Right ventricle myocardium inferior (tissue), 1 donor: ENCODE measurements at regions of chr15 and their contacts with region 1.

Region 1: DNA sequence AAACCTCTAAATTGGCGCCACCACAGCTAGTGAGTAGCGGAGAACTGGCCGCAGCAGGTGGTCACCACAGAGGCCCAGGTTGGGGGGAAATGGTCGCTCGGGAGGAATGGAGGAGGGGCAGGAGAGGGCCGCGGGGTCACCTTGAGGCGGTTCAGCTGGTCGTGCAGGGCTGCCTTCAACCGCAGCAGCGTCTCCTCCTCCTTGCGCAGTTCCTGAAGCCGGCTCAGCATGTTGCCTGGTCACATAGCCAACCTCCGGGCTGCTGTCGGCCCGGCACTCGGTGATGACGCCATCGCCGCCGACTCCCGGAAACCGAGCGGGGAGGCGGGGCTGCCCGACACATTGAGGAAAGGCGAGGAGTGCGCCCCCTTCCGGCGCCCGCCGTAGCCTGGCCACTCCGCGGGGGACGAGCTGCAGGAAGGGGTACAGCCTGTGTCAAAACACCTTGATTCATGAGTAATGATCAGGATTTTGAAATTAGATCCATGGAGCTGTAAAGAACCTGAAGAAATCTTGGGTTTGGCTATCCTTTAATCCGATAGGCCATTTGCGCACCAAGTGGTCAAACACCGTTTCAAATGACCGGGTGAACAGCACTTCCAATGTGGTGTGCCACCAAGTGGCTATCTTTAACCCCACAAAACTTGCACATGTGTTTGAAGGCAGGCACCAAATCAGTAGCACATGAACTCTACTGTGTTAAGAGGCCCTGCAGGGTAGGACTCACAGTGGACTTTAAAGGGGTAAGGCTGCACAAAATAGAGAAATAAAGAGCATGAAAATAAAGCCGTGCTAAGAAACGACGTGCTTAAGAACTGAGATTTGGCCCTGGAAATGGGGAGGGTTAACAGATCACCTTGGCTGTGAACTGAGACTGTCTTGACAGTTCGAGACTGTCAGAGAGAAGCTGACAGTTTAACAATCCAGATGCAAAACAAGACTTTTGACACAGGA is at the start of gene SNAPC5:
- DNase-seq: peak; percentile 99
- ATAC-seq: peak; percentile 97
- total RNA-seq, gene SNAPC5: 40.8 TPM

Region 2: GRCh38 chr15:65584241-65584640 is 913.5 kb before region 1 on chr15:
- intact Hi-C with region 1: no loop called
- DNase-seq: no peak
- ATAC-seq: no peak

Region 3: GRCh38 chr15:66251790-66252684 is 245.7 kb before region 1 on chr15:
- intact Hi-C with region 1: loop called (anchors 5 kb)
- DNase-seq: peak; percentile 71
- ATAC-seq: peak; percentile 82

Region 4: GRCh38 chr15:66293419-66294156 is 204.2 kb before region 1 on chr15 and contains the start of gene DIS3L:
- intact Hi-C with region 1: loop called (anchors 5 kb)
- DNase-seq: peak; percentile 88
- ATAC-seq: peak; percentile 91
- total RNA-seq, gene DIS3L: 40.3 TPM

Region 5: GRCh38 chr15:66356345-66357236 is 141.2 kb before region 1 on chr15 and contains the start of gene TIPIN:
- intact Hi-C with region 1: loop called (anchors 10 kb)
- DNase-seq: peak; percentile 97
- ATAC-seq: peak; percentile 98
- total RNA-seq, gene TIPIN: 2.8 TPM

Region 6: DNA sequence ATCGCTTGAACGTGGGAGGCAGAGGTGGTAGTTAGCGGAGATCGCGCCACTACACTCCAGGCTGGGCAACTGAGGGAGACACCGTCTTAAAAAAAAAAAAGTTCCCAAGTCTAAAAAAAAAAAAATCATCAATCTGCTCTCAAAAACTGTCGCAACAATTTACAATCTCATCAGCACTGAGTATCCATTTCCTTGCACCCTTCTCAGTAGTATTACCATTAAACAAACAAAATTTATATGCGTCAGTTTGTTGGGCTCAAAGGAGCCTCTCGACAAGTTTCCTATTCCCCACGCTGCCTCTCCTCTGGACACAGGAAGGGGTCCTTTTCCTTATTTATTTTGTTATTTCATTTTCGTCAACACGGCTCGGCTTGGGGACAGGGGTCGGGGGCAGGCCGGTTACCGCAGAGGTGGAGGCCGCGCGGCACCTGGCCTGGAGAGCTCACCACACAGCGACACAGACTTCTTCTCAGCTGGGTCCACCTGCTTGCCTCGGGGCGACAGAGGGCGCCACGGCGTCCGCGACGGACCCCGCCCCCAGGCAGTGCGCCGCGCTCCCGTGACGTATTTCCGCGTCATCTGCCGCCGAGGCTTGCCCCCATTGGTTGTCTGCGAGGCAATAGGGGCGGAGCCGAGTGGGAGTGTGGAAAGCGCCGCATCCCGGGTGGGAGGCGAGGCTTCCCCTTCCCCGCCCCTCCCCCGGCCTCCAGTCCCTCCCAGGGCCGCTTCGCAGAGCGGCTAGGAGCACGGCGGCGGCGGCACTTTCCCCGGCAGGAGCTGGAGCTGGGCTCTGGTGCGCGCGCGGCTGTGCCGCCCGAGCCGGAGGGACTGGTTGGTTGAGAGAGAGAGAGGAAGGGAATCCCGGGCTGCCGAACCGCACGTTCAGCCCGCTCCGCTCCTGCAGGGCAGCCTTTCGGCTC is 111.3 kb before region 1 on chr15 and contains the start of gene MAP2K1:
- intact Hi-C with region 1: loop called (anchors 1 kb)
- DNase-seq: peak; percentile 99
- ATAC-seq: peak; percentile 99
- total RNA-seq, gene MAP2K1: 47.3 TPM

Region 7: DNA sequence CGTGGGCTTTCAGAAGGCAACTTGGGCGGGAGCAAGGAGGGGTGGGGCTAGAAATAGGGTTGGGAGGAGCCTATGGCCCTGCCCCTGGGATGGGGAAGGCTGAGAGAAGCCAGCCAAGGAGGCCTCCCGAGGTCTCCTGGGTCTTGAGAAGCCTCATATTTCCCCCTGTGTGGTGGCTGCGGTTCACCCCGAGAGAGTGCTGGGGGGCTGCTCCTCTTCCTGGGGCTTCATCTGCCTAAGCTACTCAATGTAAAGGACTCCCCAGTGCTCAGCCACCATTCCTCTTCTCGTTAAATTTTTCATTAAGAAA is 378.6 kb after region 1 on chr15:
- intact Hi-C with region 1: no loop called
- DNase-seq: no peak
- ATAC-seq: no peak